Activated T-helper 1 cell treated with anti-CD3 and anti-CD28 coated beads, Interleukin-12 subunit alpha, Interleukin-12 subunit beta, Interleukin-2, Interleukin-4 antibody, amounts not matched to agents 30 ng/mL and 10 ng/mL and 1 ng/mL, durations not matched to agents 14 hours and 24 hours and 36 hours (primary cell): ENCODE measurements at regions of chr3 and their contacts with region 1.

Region 1: GRCh38 chr3:181176601-181177000 is 187.1 kb upstream of the DNAJC19 start:
- DNase-seq: no peak
- H3K4me3 Mint-ChIP-seq: no peak overlapping the region
- H3K27ac Mint-ChIP-seq: no peak overlapping the region
- H3K4me1 Mint-ChIP-seq: no peaks in the 10 kb centered on the region
- H3K27me3 Mint-ChIP-seq: no peaks in the 10 kb centered on the region

Region 2: GRCh38 chr3:180802837-180803236 is 373.8 kb before region 1 on chr3:
- intact Hi-C with region 1: loop called (anchors 5 kb)
- DNase-seq: no peak
- H3K4me3 Mint-ChIP-seq: no peak overlapping the region
- H3K27ac Mint-ChIP-seq: no peak overlapping the region
- H3K4me1 Mint-ChIP-seq: no peaks in the 10 kb centered on the region
- H3K27me3 Mint-ChIP-seq: peaks cover 1% of the 10 kb centered on the region

Region 3: DNA sequence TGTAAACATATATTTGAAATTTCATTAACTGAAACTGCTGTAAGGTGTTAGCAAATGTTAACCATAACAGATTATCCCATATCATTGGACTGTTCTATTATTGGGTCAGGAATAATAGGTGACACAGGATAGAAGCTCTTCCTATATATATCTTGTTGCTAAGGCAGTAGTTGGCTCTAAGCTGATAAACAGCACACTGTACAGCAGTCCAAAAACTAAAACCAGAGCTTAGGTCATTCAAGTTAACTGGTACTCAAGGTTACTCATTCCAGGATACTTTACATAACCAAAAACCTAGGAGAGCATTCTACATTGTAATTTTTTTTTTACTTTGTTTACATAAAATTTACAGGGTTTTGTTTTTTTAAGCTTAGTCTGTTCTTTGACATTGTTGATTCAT is 196.0 kb before region 1 on chr3:
- intact Hi-C with region 1: no loop called
- DNase-seq: no peak
- H3K4me3 Mint-ChIP-seq: no peak overlapping the region
- H3K27ac Mint-ChIP-seq: no peak overlapping the region
- H3K4me1 Mint-ChIP-seq: no peaks in the 10 kb centered on the region
- H3K27me3 Mint-ChIP-seq: no peaks in the 10 kb centered on the region

Region 4: DNA sequence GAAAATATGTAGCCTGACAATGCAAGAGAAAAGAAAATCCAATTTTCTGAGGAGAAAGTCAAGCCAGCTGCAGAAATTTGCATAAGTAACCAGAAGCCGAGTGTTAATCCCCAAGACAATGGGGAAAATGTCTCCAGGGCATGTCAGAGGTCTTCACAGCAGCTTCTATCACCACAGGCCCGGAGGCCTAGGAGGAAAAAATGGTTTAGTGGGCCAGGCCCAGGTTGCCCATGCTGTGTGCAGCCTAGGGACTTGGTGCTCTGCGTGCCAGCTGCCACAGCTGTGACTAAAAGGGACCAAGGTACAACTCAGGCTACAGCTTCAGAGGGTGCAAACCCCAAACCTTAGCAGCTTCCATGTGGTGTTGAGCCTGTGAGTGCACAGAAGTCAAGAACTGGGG is 333.9 kb after region 1 on chr3:
- intact Hi-C with region 1: no loop called
- DNase-seq: no peak
- H3K4me3 Mint-ChIP-seq: no peak overlapping the region
- H3K27ac Mint-ChIP-seq: no peak overlapping the region
- H3K4me1 Mint-ChIP-seq: no peaks in the 10 kb centered on the region
- H3K27me3 Mint-ChIP-seq: no peaks in the 10 kb centered on the region